SK-N-SH (cell line): ENCODE measurements at regions of chr6 and their contacts with region 1.

Region 1: GRCh38 chr6:37169496-37170272 is at the start of gene PIM1:
- DNase-seq: peak; percentile 99
- H3K4me3 ChIP-seq: peak within 1 kb of the TSS; percentile 89 to 93
- H3K27ac ChIP-seq: peak within 1 kb of the TSS; percentile 88 to 95
- H3K4me1 ChIP-seq: peaks cover 4 to 19% of the 10 kb centered on the region in 2 experiments; a peak in 3 of 4 replicates
- H3K27me3 ChIP-seq: no peaks in the 10 kb centered on the region
- CTCF ChIP-seq: no peak
- EP300 ChIP-seq: peak in 1 of 2 experiments; percentile 31; a peak in 1 of 4 replicates
- RAD21 ChIP-seq: no peak
- polyA plus RNA-seq, gene PIM1: 33.9 and 35.3 TPM in 2 replicates

Region 2: DNA sequence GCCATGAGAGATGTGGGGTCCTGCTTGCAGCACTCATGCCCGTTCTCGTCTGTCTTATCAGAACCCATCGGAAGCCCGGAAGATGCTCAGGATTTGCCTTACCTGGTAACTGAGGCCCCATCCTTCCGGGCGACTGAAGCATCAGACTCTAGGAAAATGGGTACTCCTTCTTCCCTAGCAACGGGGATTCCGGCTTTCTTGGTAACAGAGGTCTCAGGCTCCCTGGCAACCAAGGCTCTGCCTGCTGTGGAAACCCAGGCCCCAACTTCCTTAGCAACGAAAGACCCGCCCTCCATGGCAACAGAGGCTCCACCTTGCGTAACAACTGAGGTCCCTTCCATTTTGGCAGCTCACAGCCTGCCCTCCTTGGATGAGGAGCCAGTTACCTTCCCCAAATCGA is 206.8 kb before region 1 on chr6:
- CTCF ChIA-PET with region 1: no interaction called
- POLR2A ChIA-PET with region 1: no interaction called
- DNase-seq: no peak
- H3K4me3 ChIP-seq: no peak overlapping the region
- H3K27ac ChIP-seq: no peak overlapping the region
- H3K4me1 ChIP-seq: peaks cover 3 to 14% of the 10 kb centered on the region in 2 experiments; a peak in 1 of 4 replicates
- H3K27me3 ChIP-seq: no peaks in the 10 kb centered on the region
- CTCF ChIP-seq: no peak
- EP300 ChIP-seq: no peak
- RAD21 ChIP-seq: no peak

Region 3: GRCh38 chr6:37011656-37012378 is 157.9 kb before region 1 on chr6:
- CTCF ChIA-PET with region 1: interaction called, 10 read pairs
- POLR2A ChIA-PET with region 1: no interaction called
- DNase-seq: no peak
- H3K4me3 ChIP-seq: no peak overlapping the region
- H3K27ac ChIP-seq: no peak overlapping the region
- H3K4me1 ChIP-seq: no peaks in the 10 kb centered on the region
- H3K27me3 ChIP-seq: no peaks in the 10 kb centered on the region
- CTCF ChIP-seq: no peak
- EP300 ChIP-seq: no peak
- RAD21 ChIP-seq: no peak

Region 4: GRCh38 chr6:37051138-37052026 is 118.3 kb before region 1 on chr6:
- CTCF ChIA-PET with region 1: interaction called, 490 read pairs
- POLR2A ChIA-PET with region 1: interaction called, 27 read pairs
- DNase-seq: peak; percentile 93
- H3K4me3 ChIP-seq: no peak overlapping the region; a peak in 1 of 4 replicates
- H3K27ac ChIP-seq: no peak overlapping the region
- H3K4me1 ChIP-seq: peaks cover 0 to 14% of the 10 kb centered on the region in 2 experiments; a peak in 1 of 4 replicates
- H3K27me3 ChIP-seq: no peaks in the 10 kb centered on the region
- CTCF ChIP-seq: peak; percentile 85
- EP300 ChIP-seq: no peak
- RAD21 ChIP-seq: peak; percentile 98

Region 5: DNA sequence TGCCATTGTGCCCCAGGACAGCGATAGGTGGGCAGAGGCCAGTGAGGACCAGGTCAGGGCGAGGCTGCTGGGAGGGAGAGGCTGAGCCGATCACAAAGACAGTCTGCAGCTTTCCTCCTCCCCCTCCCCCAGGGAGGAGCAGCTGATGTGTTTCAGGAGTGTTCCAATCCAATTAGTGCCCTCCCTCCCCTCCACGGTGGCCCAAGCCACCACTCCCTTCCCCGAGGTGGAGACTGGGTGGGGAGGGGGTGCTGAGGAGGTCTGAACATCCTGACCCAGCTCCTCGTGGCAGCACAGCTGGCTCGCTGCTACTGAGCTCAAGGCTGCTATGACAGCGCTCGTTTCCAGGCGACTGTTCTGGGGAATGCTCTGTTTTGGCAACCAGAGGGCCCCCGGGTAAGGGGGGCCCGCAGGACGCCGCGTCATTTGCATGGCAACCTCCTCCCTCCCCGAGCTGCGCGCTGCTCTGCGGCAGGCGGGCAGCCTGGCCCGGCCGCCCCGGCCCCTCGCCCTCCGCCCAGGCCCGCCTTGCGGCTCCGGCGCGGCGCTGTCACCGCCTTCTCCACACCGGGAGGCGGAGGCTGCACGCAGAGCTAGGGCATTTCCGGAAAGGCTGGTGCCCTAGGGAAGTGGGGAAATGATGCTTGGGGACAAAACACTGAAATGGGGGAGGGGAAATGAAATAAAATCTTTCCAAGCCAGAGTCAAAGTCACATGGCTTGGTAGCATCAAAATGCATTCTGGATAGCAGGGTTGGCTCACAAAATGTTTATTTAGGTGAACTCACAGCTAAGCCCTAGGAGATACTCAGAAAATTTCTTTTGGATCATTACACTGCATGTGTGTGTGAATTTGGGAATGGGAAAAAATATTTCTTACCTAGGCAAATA is 67.2 kb before region 1 on chr6:
- CTCF ChIA-PET with region 1: interaction called, 27 read pairs
- POLR2A ChIA-PET with region 1: interaction called, 17 read pairs
- DNase-seq: peak; percentile 94
- H3K4me3 ChIP-seq: peak overlapping the region; percentile 42 to 56
- H3K27ac ChIP-seq: peak overlapping the region; percentile 86 to 93
- H3K4me1 ChIP-seq: peaks cover 18 to 27% of the 10 kb centered on the region in 2 experiments
- H3K27me3 ChIP-seq: no peaks in the 10 kb centered on the region
- CTCF ChIP-seq: no peak
- EP300 ChIP-seq: peak in 1 of 2 experiments; percentile 48; a peak in 2 of 4 replicates
- RAD21 ChIP-seq: peak; percentile 28; the same call in 1 of the 2 replicates

Region 6: DNA sequence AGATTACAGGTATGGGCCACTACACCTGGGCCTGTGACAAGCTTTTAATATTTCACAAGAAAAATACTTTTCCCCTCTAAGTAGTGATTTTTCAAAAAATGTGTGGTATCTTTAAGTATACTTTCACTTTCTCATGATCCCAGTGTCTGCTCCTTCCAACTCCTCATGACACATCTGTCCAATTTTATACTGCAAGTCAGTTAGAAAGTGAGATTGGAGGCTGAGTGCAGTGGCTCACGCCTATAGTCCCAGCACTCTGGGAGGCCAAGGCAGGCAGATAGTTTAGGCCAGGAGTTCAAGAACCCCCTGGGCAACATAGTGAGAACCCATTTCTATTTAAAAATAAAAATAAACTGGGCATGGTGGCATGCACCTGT is 20.5 kb after region 1 on chr6:
- CTCF ChIA-PET with region 1: interaction called, 26 read pairs
- POLR2A ChIA-PET with region 1: no interaction called
- DNase-seq: no peak
- H3K4me3 ChIP-seq: no peak overlapping the region
- H3K27ac ChIP-seq: no peak overlapping the region
- H3K4me1 ChIP-seq: peaks cover 0 to 5% of the 10 kb centered on the region in 2 experiments; a peak in 1 of 4 replicates
- H3K27me3 ChIP-seq: no peaks in the 10 kb centered on the region
- CTCF ChIP-seq: no peak
- EP300 ChIP-seq: no peak
- RAD21 ChIP-seq: no peak

Region 7: DNA sequence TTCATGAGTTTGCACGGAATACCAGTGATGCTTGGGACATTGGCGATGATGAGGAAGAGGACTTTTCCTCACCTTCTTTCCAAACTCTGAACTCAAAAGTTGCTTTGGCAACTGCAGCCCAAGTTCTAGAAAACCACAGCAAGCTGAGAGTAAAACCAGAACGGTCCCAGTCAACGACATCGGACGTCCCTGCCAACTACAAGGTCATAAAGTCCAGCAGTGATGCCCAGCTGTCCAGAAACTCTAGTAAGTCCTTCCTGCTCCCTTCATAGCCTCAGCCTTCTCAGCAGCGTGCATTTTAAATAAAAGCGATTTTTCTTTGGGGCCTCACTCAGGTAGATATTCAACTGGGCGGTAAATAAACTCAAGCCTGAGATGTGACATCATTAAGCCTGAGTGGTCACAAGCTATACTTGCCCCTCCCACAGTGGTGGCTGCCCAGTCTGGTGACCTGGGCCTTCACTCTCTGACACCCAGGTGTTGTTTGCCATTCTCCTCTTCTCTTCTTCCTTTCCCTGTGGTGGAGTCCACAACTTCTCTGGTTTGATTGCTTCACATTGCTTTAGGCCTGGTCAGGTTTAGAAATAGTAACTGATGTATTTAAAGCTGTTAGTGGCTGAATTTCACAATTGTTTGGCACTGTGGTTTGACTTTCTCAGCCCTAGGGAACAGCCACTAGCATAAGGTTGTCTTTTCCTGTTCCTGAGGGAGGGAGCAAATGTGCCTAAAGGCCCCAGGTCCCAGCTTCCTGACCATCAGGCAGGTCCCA is 109.9 kb after region 1 on chr6:
- CTCF ChIA-PET with region 1: no interaction called
- POLR2A ChIA-PET with region 1: no interaction called
- DNase-seq: no peak
- H3K4me3 ChIP-seq: no peak overlapping the region
- H3K27ac ChIP-seq: no peak overlapping the region
- H3K4me1 ChIP-seq: no peaks in the 10 kb centered on the region; a peak in 1 of 4 replicates
- H3K27me3 ChIP-seq: no peaks in the 10 kb centered on the region
- CTCF ChIP-seq: no peak
- EP300 ChIP-seq: no peak
- RAD21 ChIP-seq: no peak